Sigmoid colon (tissue), 7 donors: ENCODE measurements at regions of chr9 and their contacts with region 1.

Region 1: DNA sequence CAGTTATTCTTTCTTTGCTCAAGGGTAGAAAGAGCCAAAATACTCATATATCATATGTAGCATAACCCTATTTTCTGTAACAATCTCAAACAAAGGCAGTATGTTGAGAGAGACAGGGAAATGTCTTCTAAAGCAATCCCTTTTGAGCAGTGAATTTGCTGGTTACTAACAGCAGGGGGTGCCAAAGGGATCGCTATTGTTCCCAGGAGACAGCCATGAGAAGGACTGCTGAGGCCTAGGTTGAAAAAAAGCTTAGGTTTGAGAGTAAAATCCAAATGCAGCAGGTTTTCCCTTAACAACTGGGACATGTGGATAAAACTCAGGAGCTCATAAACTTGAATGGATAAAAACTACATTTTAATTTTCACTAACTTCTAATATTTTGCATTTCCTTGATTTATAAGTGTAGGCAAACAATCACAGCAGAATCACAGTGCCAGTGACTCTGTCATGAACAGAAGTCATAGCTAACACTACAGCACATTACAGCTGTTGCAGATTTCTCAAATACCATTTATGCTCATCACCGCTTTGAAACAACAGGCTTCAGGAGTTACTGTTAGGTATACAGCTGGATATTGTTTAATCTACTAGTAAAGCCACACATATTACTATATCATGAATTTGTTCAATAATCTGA is 148.4 kb downstream of the MAPKAP1 start:
- DNase-seq: peak; percentile 83
- H3K4me3 ChIP-seq: no peak overlapping the region
- H3K27ac ChIP-seq: peak overlapping the region in 3 of 4 donors; percentile 4 to 42 (median 24)
- H3K4me1 ChIP-seq: peaks cover 0 to 51% (median 28%) of the 10 kb centered on the region in 4 donors
- H3K27me3 ChIP-seq: no peaks in the 10 kb centered on the region
- CTCF ChIP-seq: peak; percentile 59 to 77 (median 74)
- EP300 ChIP-seq: no peak
- POLR2A ChIP-seq: no peak

Region 2: DNA sequence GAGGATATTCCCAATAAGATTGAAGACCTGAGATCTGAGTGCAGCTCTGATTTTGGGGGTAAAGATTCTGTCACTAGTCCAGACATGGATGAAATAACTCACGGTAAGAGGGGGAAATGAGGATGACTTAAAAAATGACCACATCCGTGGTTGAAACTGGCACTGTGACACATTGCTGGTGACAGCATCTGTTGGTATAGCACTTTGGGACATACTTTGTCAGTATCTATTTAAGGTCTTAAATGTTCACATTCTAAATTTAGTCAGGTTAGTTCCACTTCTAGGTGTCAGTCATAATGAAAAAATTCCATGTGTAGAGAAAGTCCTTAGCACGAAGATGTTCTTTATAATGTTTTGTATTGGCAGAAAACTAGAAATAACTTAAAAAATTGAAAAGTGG is 226.0 kb before region 1 on chr9:
- intact Hi-C with region 1: no loop called
- DNase-seq: no peak
- H3K4me3 ChIP-seq: no peak overlapping the region
- H3K27ac ChIP-seq: no peak overlapping the region
- H3K4me1 ChIP-seq: no peaks in the 10 kb centered on the region
- H3K27me3 ChIP-seq: no peaks in the 10 kb centered on the region
- CTCF ChIP-seq: no peak
- EP300 ChIP-seq: no peak
- POLR2A ChIP-seq: no peak

Region 3: GRCh38 chr9:125631391-125632085 is 73.0 kb after region 1 on chr9:
- intact Hi-C with region 1: loop called (anchors 5 kb)
- DNase-seq: no peak
- H3K4me3 ChIP-seq: no peak overlapping the region
- H3K27ac ChIP-seq: no peak overlapping the region
- H3K4me1 ChIP-seq: peaks cover 0 to 49% (median 27%) of the 10 kb centered on the region in 4 donors
- H3K27me3 ChIP-seq: no peaks in the 10 kb centered on the region
- CTCF ChIP-seq: peak; percentile 44 to 69 (median 48)
- EP300 ChIP-seq: no peak
- POLR2A ChIP-seq: no peak

Region 4: DNA sequence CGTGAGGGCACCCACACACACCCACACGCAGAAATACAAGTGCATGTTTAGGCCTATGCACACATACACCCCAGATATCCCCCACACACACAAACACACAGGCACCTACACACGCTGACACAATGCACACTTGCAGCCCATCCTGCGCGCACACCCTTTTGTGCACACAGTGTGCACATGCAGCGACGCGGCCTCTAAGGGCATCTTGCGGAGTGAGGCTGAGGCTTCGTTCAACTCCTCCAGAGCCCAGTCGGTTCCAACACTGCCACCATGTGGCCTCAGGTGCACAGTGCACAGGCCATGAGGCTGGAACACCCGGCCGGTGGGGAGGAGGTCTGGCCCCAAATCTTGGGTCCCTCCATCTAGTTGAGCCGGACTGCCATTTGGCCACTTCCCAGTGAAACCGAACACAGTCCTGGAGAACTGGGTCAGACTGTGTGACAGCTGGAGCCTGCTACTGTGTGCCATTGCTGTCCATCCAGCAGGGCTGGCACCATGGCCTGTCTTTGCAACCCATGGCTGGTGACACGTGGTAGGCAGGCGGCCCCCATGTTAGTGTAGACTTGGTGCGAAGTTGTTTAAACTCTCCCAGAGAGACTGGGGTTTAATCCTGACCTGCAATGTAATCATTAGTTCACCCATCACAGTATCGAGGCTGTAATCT is 670.3 kb after region 1 on chr9:
- intact Hi-C with region 1: loop called (anchors 1 kb)
- DNase-seq: peak; percentile 84
- H3K4me3 ChIP-seq: no peak overlapping the region
- H3K27ac ChIP-seq: no peak overlapping the region
- H3K4me1 ChIP-seq: peaks cover 0 to 6% (median 0%) of the 10 kb centered on the region in 4 donors
- H3K27me3 ChIP-seq: peaks cover 0 to under 1% (median 0%) of the 10 kb centered on the region in 3 donors
- CTCF ChIP-seq: peak; percentile 87 to 98 (median 95)
- EP300 ChIP-seq: no peak
- POLR2A ChIP-seq: no peak